H1 (cell line): ENCODE measurements at regions of chr17 and their contacts with region 1.

Region 1: GRCh38 chr17:77374170-77374936 is 233.6 kb downstream of the SEC14L1 start:
- DNase-seq: peak; percentile 59 to 82
- H3K4me3 ChIP-seq: peak overlapping the region; percentile 76 to 86 (median 82)
- H3K27ac ChIP-seq: peak overlapping the region; percentile 54
- H3K4me1 ChIP-seq: peaks cover 9 to 55% (median 45%) of the 10 kb centered on the region in 4 experiments
- H3K27me3 ChIP-seq: no peaks in the 10 kb centered on the region
- CTCF ChIP-seq: peak; percentile 41 to 53 (median 51)
- EP300 ChIP-seq: no peak
- POLR2A ChIP-seq: peak in 1 of 2 experiments; percentile 53; a peak in 2 of 3 replicates
- RAD21 ChIP-seq: peak; percentile 35 to 50

Region 2: GRCh38 chr17:77307479-77308198 is 66.7 kb before region 1 on chr17:
- CTCF ChIA-PET with region 1: no interaction called
- POLR2A ChIA-PET with region 1: no interaction called
- DNase-seq: no peak
- H3K4me3 ChIP-seq: no peak overlapping the region
- H3K27ac ChIP-seq: no peak overlapping the region
- H3K4me1 ChIP-seq: peaks cover 0 to 9% (median 0%) of the 10 kb centered on the region in 4 experiments; a peak in 3 of 7 replicates
- H3K27me3 ChIP-seq: no peaks in the 10 kb centered on the region
- CTCF ChIP-seq: no peak
- EP300 ChIP-seq: no peak
- POLR2A ChIP-seq: no peak
- RAD21 ChIP-seq: no peak

Region 3: GRCh38 chr17:77331301-77331864 is 43.0 kb before region 1 on chr17:
- CTCF ChIA-PET with region 1: interaction called, 29 read pairs
- POLR2A ChIA-PET with region 1: no interaction called
- DNase-seq: peak; percentile 62 to 99
- H3K4me3 ChIP-seq: peak overlapping the region in 1 of 4 experiments; percentile 39; a peak in 2 of 8 replicates
- H3K27ac ChIP-seq: no peak overlapping the region
- H3K4me1 ChIP-seq: peaks cover 0 to 9% (median under 1%) of the 10 kb centered on the region in 4 experiments; a peak in 3 of 7 replicates
- H3K27me3 ChIP-seq: no peaks in the 10 kb centered on the region
- CTCF ChIP-seq: peak; percentile 90 to 94 (median 92)
- EP300 ChIP-seq: no peak
- POLR2A ChIP-seq: no peak
- RAD21 ChIP-seq: peak; percentile 97

Region 4: DNA sequence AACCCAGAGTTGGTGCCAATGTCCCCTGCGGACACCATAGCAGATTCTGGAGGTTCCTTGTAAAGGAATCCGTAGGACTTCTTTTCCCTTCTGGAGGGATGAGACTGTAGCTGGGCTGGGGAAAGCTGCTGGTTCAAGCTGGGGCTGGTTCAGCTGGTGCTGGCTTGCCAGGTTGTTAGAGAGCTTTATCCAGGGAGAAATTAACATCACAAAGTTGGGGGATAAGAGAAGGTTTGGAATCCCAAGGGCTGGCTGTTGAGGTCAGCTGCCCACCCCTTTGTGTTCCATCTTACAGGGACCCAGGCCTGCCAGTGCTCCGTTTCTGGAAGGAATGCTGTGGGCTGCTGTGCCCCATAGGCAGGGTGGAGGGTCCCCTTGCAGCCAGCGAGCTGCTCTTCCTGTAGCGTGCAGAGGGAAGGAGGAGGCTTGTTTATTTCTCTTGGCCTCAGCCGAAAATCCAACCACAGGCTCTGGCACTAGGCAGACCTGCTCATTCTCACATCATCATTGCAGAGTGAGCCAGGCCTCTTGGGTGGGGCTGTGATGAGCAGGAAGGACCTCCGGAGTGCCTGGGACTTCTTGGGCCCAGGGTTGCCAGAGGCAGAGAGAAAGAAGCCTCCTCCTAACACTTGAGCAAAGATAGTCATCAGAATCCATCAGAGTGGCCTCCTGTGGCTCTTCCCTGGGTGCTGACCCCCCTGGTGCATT is 17.5 kb after region 1 on chr17:
- CTCF ChIA-PET with region 1: interaction called, 6 read pairs
- POLR2A ChIA-PET with region 1: interaction called, 16 read pairs
- DNase-seq: peak in 1 of 2 experiments; percentile 31
- H3K4me3 ChIP-seq: peak overlapping the region in 1 of 4 experiments; percentile 33; a peak in 2 of 8 replicates
- H3K27ac ChIP-seq: peak overlapping the region; percentile 87
- H3K4me1 ChIP-seq: peaks cover 16 to 59% (median 45%) of the 10 kb centered on the region in 4 experiments
- H3K27me3 ChIP-seq: no peaks in the 10 kb centered on the region
- CTCF ChIP-seq: no peak
- EP300 ChIP-seq: no peak
- POLR2A ChIP-seq: no peak; a peak in 1 of 3 replicates
- RAD21 ChIP-seq: no peak; a peak in 1 of 4 replicates

Region 5: GRCh38 chr17:77404812-77405581 is 30.6 kb after region 1 on chr17:
- CTCF ChIA-PET with region 1: interaction called, 19 read pairs
- POLR2A ChIA-PET with region 1: interaction called, 7 read pairs
- DNase-seq: no peak
- H3K4me3 ChIP-seq: no peak overlapping the region
- H3K27ac ChIP-seq: no peak overlapping the region
- H3K4me1 ChIP-seq: peaks cover 6 to 25% (median 15%) of the 10 kb centered on the region in 4 experiments
- H3K27me3 ChIP-seq: no peaks in the 10 kb centered on the region
- CTCF ChIP-seq: no peak
- EP300 ChIP-seq: no peak
- POLR2A ChIP-seq: no peak
- RAD21 ChIP-seq: no peak